ENCODE measurements at regions of chr4 and their contacts with region 1.

Region 1: GRCh38 chr4:184745831-184746795 is 12.2 kb upstream of the CENPU start:
- DNase-seq: peak; percentile 87
- H3K4me3 ChIP-seq: no peak overlapping the region
- CTCF ChIP-seq: peak; percentile 75

Region 2: GRCh38 chr4:184733654-184734524 is 12.2 kb before region 1 on chr4 and contains the start of gene CENPU:
- CTCF ChIA-PET with region 1: interaction called, 44 read pairs
- POLR2A ChIA-PET with region 1: no interaction called
- DNase-seq: peak; percentile 92
- H3K4me3 ChIP-seq: peak within 1 kb of the TSS; percentile 82
- CTCF ChIP-seq: no peak

Region 3: GRCh38 chr4:184860018-184860779 is 114.1 kb after region 1 on chr4:
- CTCF ChIA-PET with region 1: no interaction called
- POLR2A ChIA-PET with region 1: no interaction called
- DNase-seq: no peak
- H3K4me3 ChIP-seq: no peak overlapping the region
- CTCF ChIP-seq: no peak

Region 4: DNA sequence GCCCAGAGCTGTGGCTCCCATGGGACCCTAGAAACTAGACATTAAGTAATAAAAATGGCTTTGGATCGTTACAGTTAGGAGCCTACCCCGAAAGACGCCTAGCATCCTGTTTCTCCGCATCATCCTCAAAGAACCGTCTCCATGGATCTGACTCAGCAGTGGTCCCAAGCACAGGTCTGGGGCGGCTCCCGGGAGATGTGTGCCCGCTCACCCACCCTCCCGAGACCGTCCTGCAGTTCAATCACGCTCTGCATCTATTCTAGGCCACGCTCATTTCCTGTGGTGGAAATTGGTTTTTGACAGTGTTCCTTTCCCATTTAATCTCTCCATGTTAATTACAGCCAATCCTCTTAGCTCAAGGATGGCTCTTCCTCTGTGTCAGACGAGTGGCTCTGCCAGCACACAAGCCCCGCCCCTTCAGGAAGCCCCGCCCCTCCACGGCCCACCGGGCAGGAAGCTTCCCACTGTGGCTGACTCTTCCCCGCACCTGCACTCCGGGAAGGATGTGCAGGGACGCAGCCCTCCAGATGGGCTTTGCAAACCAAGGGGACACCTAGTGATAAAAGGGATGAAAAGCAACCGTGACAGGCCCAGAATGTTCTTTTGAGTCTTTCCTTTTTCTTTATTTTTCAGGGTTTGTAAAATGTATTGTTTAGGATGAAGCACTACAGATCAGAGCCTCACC is 237.7 kb after region 1 on chr4:
- CTCF ChIA-PET with region 1: interaction called, 13 read pairs
- POLR2A ChIA-PET with region 1: no interaction called
- DNase-seq: no peak
- H3K4me3 ChIP-seq: no peak overlapping the region
- CTCF ChIP-seq: peak; percentile 28

Measured in AG04449 (cell line).